PC-3 (cell line): ENCODE measurements at regions of chr4 and their contacts with region 1.

Region 1: DNA sequence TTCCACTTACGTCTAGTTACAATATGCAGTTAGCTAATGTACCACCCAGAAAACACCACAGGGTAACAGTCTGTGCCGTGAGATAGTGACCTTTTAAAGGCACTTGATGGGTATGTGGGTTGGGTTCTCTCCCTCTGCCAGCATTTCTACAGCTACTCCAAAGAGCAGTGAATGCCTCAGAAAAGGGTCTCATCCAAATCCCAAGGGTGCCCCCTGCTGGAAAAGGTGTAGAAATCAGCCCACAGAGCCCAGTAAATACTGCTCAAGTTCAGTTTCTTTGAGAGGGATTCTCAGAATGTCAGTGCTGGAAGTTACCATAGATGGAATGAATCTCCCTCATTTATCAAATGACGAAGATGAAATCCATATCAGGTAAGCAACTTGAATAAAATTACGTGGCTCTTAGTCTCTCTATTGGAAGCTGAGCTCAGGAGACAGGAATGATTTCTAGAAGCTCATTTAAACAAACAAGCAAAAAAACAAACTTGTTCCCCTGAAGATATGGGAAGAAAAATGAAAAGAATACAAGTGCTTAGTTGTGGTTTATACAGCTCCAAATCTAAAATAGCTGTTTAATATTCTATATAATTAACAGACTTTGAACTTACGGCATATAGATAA is 9.5 kb downstream of the RNF175 start:
- DNase-seq: peak; percentile 77
- ATAC-seq: peak; percentile 88
- H3K4me3 ChIP-seq: no peak overlapping the region
- H3K27ac ChIP-seq: no peak overlapping the region
- H3K4me1 ChIP-seq: peaks cover 7% of the 10 kb centered on the region; the same call in 1 of the 2 replicates
- H3K27me3 ChIP-seq: no peaks in the 10 kb centered on the region
- CTCF ChIP-seq: peak; percentile 72

Region 2: DNA sequence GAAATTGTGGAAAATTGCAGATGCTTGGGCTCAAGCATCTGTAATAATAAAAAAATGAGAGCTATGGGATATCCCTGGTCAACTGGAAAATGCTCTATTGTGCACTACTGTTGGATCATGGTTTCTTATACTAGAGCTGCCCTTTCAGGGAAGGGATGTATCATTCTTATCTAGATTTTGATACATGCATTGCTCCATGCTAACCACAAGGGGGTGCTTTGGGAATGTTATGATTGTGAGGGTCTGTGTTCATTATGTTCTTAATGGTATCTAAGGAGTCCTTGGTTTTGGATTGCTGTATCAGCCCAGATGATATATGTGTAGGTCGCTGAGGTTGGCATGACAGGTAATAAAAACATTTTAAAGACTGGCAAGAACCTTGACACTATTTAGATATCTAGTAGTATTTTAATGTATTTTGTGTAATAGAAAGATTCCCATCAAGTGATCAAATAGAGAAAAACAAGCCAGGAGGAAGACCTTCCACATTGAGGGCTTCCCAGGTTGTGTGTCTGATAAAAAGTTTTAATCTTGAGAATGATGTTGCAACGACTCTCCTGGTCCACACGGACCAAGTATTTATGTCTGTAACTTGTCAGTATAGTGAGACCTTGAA is 115.5 kb before region 1 on chr4:
- CTCF ChIA-PET with region 1: no interaction called
- POLR2A ChIA-PET with region 1: interaction called, 3 read pairs
- intact Hi-C with region 1: loop called (anchors 1 kb)
- DNase-seq: peak; percentile 48
- ATAC-seq: peak; percentile 45
- H3K4me3 ChIP-seq: no peak overlapping the region
- H3K27ac ChIP-seq: no peak overlapping the region
- H3K4me1 ChIP-seq: no peaks in the 10 kb centered on the region
- H3K27me3 ChIP-seq: no peaks in the 10 kb centered on the region
- CTCF ChIP-seq: peak; percentile 72

Region 3: GRCh38 chr4:153643406-153644383 is 106.6 kb before region 1 on chr4:
- CTCF ChIA-PET with region 1: interaction called, 4 read pairs
- POLR2A ChIA-PET with region 1: no interaction called
- intact Hi-C with region 1: loop called (anchors 2 kb)
- DNase-seq: peak; percentile 60
- ATAC-seq: peak; percentile 85
- H3K4me3 ChIP-seq: no peak overlapping the region
- H3K27ac ChIP-seq: no peak overlapping the region
- H3K4me1 ChIP-seq: no peaks in the 10 kb centered on the region
- H3K27me3 ChIP-seq: no peaks in the 10 kb centered on the region
- CTCF ChIP-seq: peak; percentile 64

Region 4: DNA sequence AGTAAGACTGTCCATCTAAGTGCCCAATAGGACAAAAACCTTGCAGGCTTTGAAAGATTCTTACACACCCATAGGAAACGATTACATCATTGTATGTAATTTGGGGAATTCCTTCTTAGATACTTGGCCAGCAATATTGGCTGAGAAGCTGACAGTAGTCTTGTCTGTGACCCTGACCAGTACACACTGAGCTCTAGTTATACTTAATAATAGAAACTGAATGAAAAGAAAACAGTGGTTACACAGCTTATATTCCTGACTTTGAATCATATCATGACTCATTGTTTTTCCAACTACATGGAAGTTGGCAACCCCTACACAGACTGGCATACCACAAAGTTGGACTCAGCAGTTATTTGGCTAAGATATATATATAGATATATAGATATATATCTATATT is 73.3 kb before region 1 on chr4:
- CTCF ChIA-PET with region 1: no interaction called
- POLR2A ChIA-PET with region 1: no interaction called
- intact Hi-C with region 1: loop called (anchors 1 kb)
- DNase-seq: peak; percentile 88
- ATAC-seq: peak; percentile 97
- H3K4me3 ChIP-seq: no peak overlapping the region
- H3K27ac ChIP-seq: peak overlapping the region; percentile 87
- H3K4me1 ChIP-seq: peaks cover 20% of the 10 kb centered on the region
- H3K27me3 ChIP-seq: no peaks in the 10 kb centered on the region
- CTCF ChIP-seq: no peak